Activated CD4-positive, alpha-beta T cell treated with anti-CD3 and anti-CD28 coated beads, Interleukin-2, amount 10 ng/mL, durations not matched to agents 24 days and 14 days (primary cell): ENCODE measurements at regions of chr1 and their contacts with region 1.

Region 1: GRCh38 chr1:40385437-40386358 is 12.2 kb downstream of the SMAP2 start:
- DNase-seq: peak; percentile 93
- H3K4me3 Mint-ChIP-seq: peak overlapping the region; percentile 88
- H3K27ac Mint-ChIP-seq: peak overlapping the region; percentile 99
- H3K4me1 Mint-ChIP-seq: peaks cover 79% of the 10 kb centered on the region
- H3K27me3 Mint-ChIP-seq: no peaks in the 10 kb centered on the region

Region 2: GRCh38 chr1:40373338-40374283 is 12.1 kb before region 1 on chr1 and contains the start of gene SMAP2:
- intact Hi-C with region 1: loop called (anchors 1 kb)
- DNase-seq: peak; percentile 99
- H3K4me3 Mint-ChIP-seq: peak within 1 kb of the TSS; percentile 96
- H3K27ac Mint-ChIP-seq: peak within 1 kb of the TSS; percentile 99
- H3K4me1 Mint-ChIP-seq: peaks cover 45% of the 10 kb centered on the region
- H3K27me3 Mint-ChIP-seq: no peaks in the 10 kb centered on the region
- total RNA-seq, gene SMAP2: 156 and 157 TPM in 2 replicates

Region 3: GRCh38 chr1:40404670-40405462 is 19.2 kb after region 1 on chr1:
- intact Hi-C with region 1: loop called (anchors 1 kb)
- DNase-seq: peak; percentile 82
- H3K4me3 Mint-ChIP-seq: peak overlapping the region; percentile 77
- H3K27ac Mint-ChIP-seq: peak overlapping the region; percentile 95
- H3K4me1 Mint-ChIP-seq: peaks cover 50% of the 10 kb centered on the region
- H3K27me3 Mint-ChIP-seq: no peaks in the 10 kb centered on the region